Right ventricle myocardium inferior (tissue), 1 donor: ENCODE measurements at regions of chr11 and their contacts with region 1.

Region 1: DNA sequence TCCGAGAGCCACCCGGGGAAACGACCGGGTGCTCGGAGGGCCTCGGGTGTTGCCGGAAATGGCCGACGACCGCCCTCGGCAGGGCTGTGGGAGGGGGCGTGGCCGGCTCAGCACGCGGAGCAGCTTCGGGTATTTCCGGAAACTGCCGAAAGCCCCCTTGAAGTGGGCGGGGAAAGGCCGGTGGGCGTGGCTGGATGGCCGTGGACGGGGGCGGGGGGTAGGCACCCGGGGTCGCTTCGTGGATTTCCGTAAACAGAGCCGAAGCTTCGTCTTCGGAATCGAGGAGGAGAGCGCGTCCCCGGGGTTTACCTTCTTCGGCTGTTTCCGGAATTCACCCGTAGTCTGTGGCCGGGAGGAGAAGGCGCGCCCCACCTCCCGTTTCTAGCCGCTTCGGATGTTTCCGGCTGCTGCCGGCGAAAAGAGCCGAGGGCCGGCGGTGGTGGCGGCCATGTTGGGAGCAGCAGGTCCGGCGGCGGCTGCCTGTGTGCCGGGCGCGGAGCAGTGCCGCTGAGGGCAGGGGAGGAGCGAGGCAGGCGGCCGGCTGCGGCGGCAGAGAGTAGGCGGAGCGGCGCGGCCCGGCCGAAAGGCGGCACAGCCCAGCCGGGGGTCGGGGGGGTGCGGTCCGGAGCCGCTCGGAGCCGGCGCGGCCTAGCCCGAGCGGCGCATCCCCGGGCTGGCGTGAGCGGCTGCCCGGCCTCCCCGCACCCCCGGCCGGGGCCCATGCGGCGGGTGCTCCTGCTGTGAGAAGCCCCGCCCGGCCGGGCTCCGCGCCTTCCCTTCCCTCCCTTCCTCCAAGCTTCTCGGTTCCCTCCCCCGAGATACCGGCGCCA is at the start of gene MARK2:
- DNase-seq: peak; percentile 97
- ATAC-seq: peak; percentile 93
- total RNA-seq, gene MARK2: 37.4 TPM

Region 2: GRCh38 chr11:63871962-63872799 is 33.3 kb after region 1 on chr11:
- intact Hi-C with region 1: loop called (anchors 2 kb)
- DNase-seq: peak; percentile 84
- ATAC-seq: peak; percentile 96

Region 3: GRCh38 chr11:63888170-63889086 is 49.5 kb after region 1 on chr11:
- intact Hi-C with region 1: no loop called
- DNase-seq: peak; percentile 87
- ATAC-seq: peak; percentile 65

Region 4: DNA sequence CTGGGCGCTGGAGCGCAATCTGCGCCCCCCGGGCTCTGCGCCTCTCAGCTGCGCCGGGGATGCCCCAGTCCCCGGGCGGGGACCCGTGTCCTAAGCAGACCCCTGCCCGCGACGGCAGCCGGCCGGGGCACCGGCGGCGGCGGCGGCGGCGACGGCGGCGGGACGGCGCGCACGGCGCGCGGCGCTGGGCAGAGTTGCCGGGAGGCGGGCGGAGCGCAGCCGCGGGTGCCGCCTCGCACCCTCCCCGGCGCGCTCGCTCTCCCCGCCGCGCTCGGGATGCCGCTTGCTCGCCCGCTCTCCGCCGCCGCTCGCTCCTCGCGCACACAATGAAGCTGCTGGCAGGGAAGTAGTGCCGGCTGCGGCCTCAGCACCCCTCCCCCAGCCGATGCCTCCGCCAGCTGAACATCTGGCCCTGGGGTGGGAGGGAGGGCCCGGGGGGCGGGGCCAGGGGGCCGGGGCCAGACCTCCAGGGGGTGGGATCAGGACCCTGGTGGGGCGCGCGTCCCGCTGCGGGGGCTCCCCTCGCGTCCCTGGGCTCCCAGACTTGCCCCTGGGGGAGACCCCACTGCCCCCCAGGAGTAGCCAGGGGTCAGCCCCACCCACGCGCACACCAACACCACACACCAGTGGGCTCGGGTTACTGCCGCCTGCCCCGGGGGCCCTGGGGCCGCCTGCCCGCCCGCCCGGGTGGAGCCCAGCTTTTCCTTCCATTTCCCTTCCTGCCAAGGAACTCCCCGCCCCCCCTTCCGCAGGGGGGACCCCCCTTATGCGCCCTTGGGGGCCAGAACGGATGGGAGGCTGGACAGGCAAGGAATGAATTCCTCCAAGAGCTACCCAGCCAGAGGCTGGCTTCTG is 78.2 kb after region 1 on chr11 and contains the start of gene RCOR2:
- intact Hi-C with region 1: loop called (anchors 1 kb)
- DNase-seq: peak; percentile 91
- ATAC-seq: peak; percentile 51
- total RNA-seq, gene RCOR2: 11.1 TPM

Region 5: GRCh38 chr11:63945477-63946163 is 106.7 kb after region 1 on chr11:
- intact Hi-C with region 1: loop called (anchors 1 kb)
- DNase-seq: peak; percentile 71
- ATAC-seq: peak; percentile 84

Region 6: GRCh38 chr11:63974259-63975143 is 135.6 kb after region 1 on chr11 and contains the start of gene COX8A:
- intact Hi-C with region 1: loop called (anchors 1 kb)
- DNase-seq: peak; percentile 97
- ATAC-seq: peak; percentile 96
- total RNA-seq, gene COX8A: 1,159 TPM

Region 7: GRCh38 chr11:64152841-64153691 is 314.2 kb after region 1 on chr11:
- intact Hi-C with region 1: loop called (anchors 2 kb)
- DNase-seq: peak; percentile 92
- ATAC-seq: peak; percentile 51